ENCODE measurements at regions of chr1 and their contacts with region 1.

Region 1: DNA sequence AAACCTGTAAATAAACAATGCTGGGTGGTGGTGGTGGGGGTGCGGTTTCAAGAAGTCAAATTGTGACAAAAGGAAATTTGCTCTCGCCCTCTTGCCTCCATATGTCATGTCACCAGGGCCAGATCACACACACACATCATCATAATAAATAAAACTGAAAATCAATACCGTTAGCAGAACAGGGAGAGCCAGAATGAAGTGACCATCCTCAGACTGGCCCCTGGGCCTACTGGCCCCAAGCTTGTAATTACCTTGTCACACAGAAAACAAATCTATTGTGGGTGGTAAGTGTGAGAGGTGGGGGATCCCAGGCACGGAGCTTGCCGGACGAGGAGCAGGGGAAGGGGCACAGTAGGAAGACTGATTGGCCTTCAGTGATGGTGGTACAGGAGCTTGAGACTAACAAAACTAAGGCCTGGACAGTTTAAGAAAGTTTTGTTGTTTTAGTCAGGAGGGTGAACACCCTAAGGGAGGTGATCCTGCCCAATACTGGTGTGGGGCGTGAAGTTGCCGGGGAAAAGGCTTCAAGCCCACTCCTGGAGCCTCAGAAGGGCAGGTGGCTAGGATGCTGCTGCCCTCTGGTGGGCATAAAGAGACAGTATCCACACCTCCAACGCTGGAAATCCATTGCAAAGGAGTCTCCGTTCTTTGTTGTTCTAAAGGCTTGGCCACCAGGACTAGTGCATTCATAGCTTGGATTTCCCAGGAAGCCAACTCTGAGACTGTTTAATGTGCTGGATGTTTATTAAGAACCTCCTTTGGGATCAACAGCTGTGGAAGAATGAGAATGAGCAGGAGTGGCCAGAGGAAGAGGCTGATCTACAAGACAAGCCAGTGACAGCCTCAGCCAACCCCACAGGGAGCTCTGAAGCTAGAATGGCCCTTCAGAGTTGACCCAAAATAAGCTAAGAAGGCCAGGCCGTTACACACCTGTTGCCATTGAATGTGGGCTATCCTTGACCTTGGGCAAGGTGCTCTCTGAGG is 8.1 kb upstream of the C1orf216 start:
- DNase-seq: peak; percentile 67
- ATAC-seq: peak; percentile 90
- H3K4me3 Mint-ChIP-seq: no peak overlapping the region
- H3K27ac Mint-ChIP-seq: no peak overlapping the region
- H3K4me1 Mint-ChIP-seq: no peaks in the 10 kb centered on the region
- H3K27me3 Mint-ChIP-seq: no peaks in the 10 kb centered on the region
- CTCF ChIP-seq: peak; percentile 85

Region 2: DNA sequence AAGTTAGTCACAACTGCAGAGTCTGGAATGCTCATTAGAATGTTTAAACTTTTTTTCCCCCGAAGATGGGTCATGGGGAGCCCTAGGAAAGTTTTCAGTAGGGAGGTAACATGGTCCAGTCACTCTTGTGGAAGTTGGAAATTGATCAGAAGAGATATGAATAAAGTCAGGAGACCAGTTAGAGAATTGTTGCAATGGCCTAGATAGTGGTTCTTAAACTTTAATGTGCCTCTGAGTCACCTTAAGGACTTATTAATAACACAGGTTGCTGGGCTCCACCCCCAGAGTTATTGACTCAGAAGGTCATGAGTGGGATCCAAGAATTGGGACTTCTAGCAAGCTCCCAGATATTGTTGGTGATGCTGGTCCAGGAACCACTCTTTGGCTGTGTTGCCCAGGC is 156.8 kb before region 1 on chr1:
- CTCF ChIA-PET with region 1: interaction called, 50 read pairs
- POLR2A ChIA-PET with region 1: interaction called, 3 read pairs
- intact Hi-C with region 1: no loop called
- DNase-seq: no peak
- ATAC-seq: no peak
- H3K4me3 Mint-ChIP-seq: no peak overlapping the region
- H3K27ac Mint-ChIP-seq: no peak overlapping the region
- H3K4me1 Mint-ChIP-seq: no peaks in the 10 kb centered on the region
- H3K27me3 Mint-ChIP-seq: peaks cover 6% of the 10 kb centered on the region
- CTCF ChIP-seq: no peak

Region 3: DNA sequence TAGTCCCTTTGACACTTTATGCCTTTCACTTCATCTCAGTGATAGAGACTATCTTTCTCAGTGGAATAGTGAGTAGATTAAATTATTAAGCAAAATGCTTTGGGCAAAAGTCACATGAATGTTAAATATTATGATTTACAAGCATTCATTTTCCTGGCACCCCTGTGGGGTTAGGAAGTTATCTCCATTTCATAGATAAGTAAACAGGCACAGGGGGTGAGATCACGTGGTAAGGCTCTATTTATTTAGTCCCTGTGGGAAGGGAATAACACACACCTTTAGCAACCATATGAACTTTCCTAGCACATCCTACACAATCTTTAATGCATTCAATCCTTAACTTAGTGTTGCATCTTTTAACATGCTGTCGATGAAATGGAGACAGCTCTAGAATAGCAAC is 97.7 kb before region 1 on chr1:
- CTCF ChIA-PET with region 1: interaction called, 14 read pairs
- POLR2A ChIA-PET with region 1: no interaction called
- intact Hi-C with region 1: no loop called
- DNase-seq: no peak
- ATAC-seq: no peak
- H3K4me3 Mint-ChIP-seq: no peak overlapping the region
- H3K27ac Mint-ChIP-seq: no peak overlapping the region
- H3K4me1 Mint-ChIP-seq: peaks cover 4% of the 10 kb centered on the region
- H3K27me3 Mint-ChIP-seq: no peaks in the 10 kb centered on the region
- CTCF ChIP-seq: no peak

Region 4: GRCh38 chr1:35737120-35737519 is 10.4 kb after region 1 on chr1:
- CTCF ChIA-PET with region 1: interaction called, 32 read pairs
- POLR2A ChIA-PET with region 1: no interaction called
- intact Hi-C with region 1: no loop called
- DNase-seq: no peak
- ATAC-seq: no peak
- H3K4me3 Mint-ChIP-seq: no peak overlapping the region
- H3K27ac Mint-ChIP-seq: no peak overlapping the region
- H3K4me1 Mint-ChIP-seq: no peaks in the 10 kb centered on the region
- H3K27me3 Mint-ChIP-seq: no peaks in the 10 kb centered on the region
- CTCF ChIP-seq: no peak

Region 5: GRCh38 chr1:35753626-35754260 is 27.0 kb after region 1 on chr1:
- CTCF ChIA-PET with region 1: interaction called, 24 read pairs
- POLR2A ChIA-PET with region 1: interaction called, 4 read pairs
- intact Hi-C with region 1: no loop called
- DNase-seq: no peak
- ATAC-seq: no peak
- H3K4me3 Mint-ChIP-seq: no peak overlapping the region
- H3K27ac Mint-ChIP-seq: no peak overlapping the region
- H3K4me1 Mint-ChIP-seq: peaks cover 4% of the 10 kb centered on the region
- H3K27me3 Mint-ChIP-seq: no peaks in the 10 kb centered on the region
- CTCF ChIP-seq: no peak